ENCODE measurements at regions of chr16 and their contacts with region 1.

Region 1: DNA sequence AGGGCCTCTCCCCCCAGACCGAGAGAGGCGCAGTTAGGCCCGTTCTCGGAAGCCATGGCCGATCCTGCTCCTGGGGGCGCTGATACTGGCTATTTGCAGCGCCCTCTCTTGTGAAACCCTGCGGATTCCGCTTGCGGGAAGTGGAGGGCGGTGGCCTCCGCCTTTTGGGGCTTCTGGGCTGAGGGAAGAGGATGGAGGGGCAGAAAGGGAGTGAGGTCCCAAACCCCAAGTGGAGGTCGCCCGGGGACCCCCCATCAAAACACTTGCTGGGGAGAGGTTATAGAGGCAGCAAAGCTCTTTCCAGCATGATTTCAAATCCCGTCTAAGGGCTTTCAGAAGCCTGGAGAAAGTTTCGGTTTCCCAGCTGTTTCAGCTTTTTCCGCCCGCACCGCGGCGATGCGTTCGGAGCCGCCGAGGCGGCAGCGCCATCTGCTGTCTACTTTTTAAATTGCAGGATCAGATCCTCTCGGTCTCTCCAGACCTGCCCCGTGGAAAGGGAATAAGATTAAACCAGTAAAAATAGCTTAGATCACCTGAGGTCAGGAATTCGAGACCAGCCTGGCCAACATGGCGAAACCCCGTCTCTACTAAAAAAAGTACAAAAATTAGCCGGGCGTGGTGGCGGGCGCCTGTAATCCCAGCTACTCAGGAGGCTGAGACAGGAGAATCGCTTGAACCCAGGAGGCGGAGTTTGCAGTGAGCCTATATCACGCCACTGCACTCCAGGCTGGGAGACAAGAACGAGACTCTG is 15.8 kb downstream of the SNX20 start:
- DNase-seq: peak; percentile 88
- H3K4me3 Mint-ChIP-seq: peak overlapping the region; percentile 58
- H3K27ac Mint-ChIP-seq: peak overlapping the region; percentile 81
- H3K4me1 Mint-ChIP-seq: peaks cover 47% of the 10 kb centered on the region
- H3K27me3 Mint-ChIP-seq: peaks cover 6% of the 10 kb centered on the region

Region 2: GRCh38 chr16:50210266-50211038 is 454.9 kb before region 1 on chr16:
- CTCF ChIA-PET with region 1: interaction called, 35 read pairs
- DNase-seq: peak; percentile 84
- H3K4me3 Mint-ChIP-seq: no peak overlapping the region
- H3K27ac Mint-ChIP-seq: no peak overlapping the region
- H3K4me1 Mint-ChIP-seq: peaks cover 29% of the 10 kb centered on the region
- H3K27me3 Mint-ChIP-seq: no peaks in the 10 kb centered on the region

Region 3: GRCh38 chr16:50335196-50335958 is 329.9 kb before region 1 on chr16:
- CTCF ChIA-PET with region 1: no interaction called
- DNase-seq: peak; percentile 75
- H3K4me3 Mint-ChIP-seq: peak overlapping the region; percentile 39
- H3K27ac Mint-ChIP-seq: peak overlapping the region; percentile 98
- H3K4me1 Mint-ChIP-seq: peaks cover 82% of the 10 kb centered on the region
- H3K27me3 Mint-ChIP-seq: no peaks in the 10 kb centered on the region

Region 4: GRCh38 chr16:50368410-50369132 is 296.7 kb before region 1 on chr16 and contains the start of gene BRD7:
- CTCF ChIA-PET with region 1: interaction called, 39 read pairs
- DNase-seq: peak; percentile 66
- H3K4me3 Mint-ChIP-seq: peak within 1 kb of the TSS; percentile 84
- H3K27ac Mint-ChIP-seq: peak within 1 kb of the TSS; percentile 85
- H3K4me1 Mint-ChIP-seq: peaks cover 47% of the 10 kb centered on the region
- H3K27me3 Mint-ChIP-seq: peaks cover 14% of the 10 kb centered on the region

Region 5: GRCh38 chr16:50437769-50438437 is 227.4 kb before region 1 on chr16:
- CTCF ChIA-PET with region 1: no interaction called
- DNase-seq: no peak
- H3K4me3 Mint-ChIP-seq: no peak overlapping the region
- H3K27ac Mint-ChIP-seq: no peak overlapping the region
- H3K4me1 Mint-ChIP-seq: no peaks in the 10 kb centered on the region
- H3K27me3 Mint-ChIP-seq: peaks cover 7% of the 10 kb centered on the region

Region 6: DNA sequence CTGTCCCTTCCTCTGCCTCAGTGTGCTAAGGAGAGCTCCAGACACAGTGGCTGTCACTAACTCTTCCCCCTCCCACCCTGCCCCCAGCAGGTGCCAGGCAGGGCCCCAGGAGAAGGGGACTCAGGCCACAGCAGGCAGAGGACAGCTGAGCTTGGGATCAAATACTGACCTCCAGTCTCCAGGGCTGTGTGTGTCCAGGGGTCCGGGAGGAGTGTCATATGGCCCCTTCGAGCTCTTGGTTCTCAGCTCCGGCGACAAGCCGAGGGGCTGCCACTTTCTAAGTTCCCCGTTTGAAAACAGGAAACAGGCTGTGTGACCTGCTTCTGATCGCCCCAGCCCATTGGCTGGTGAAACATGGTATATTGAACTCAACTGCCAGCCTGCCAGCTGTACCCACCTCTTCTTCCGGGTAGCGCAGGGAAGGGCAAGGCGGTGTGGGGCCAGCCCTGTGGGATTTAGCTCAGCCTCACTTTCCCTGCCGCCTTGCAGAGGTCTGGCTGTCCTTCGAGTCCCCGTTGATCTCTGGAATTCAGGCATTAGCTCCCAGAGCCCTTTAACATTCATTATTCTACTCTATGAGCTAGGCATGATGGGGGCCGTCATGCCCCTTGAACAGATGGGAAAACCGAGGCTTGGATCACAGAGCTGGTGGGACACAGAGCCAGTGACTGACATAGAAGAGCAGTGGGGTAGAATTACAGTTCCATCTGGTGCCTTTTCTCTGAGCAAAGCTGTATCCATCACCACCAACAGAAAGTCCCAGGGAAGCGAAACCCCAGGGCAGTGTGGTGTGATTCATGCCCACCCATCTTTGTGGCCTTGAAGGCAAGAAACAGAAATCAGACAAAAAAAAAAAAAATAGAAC is 15.9 kb after region 1 on chr16 and contains the start of gene SNX20:
- CTCF ChIA-PET with region 1: interaction called, 141 read pairs
- DNase-seq: peak; percentile 82
- H3K4me3 Mint-ChIP-seq: peak within 1 kb of the TSS; percentile 92
- H3K27ac Mint-ChIP-seq: peak within 1 kb of the TSS; percentile 91
- H3K4me1 Mint-ChIP-seq: peaks cover 90% of the 10 kb centered on the region
- H3K27me3 Mint-ChIP-seq: no peaks in the 10 kb centered on the region

Region 7: GRCh38 chr16:50747207-50747956 is 82.1 kb after region 1 on chr16:
- CTCF ChIA-PET with region 1: interaction called, 183 read pairs
- DNase-seq: peak; percentile 34
- H3K4me3 Mint-ChIP-seq: peak overlapping the region; percentile 81
- H3K27ac Mint-ChIP-seq: peak overlapping the region; percentile 92
- H3K4me1 Mint-ChIP-seq: peaks cover 60% of the 10 kb centered on the region
- H3K27me3 Mint-ChIP-seq: no peaks in the 10 kb centered on the region